Motor neuron (in vitro differentiated cells): ENCODE measurements at regions of chr22 and their contacts with region 1.

Region 1: GRCh38 chr22:22959147-22959827 is 71.7 kb downstream of the IGLL5 start:
- ATAC-seq: peak; percentile 69 to 90 (median 83)
- H3K4me3 ChIP-seq: no peak overlapping the region
- H3K27ac ChIP-seq: no peak overlapping the region
- H3K4me1 ChIP-seq: no peaks in the 10 kb centered on the region

Region 2: GRCh38 chr22:22463855-22464540 is 495.3 kb before region 1 on chr22:
- in situ Hi-C with region 1: loop called in 2 of 9 experiments (anchors 25 kb)
- ATAC-seq: peak; percentile 51 to 90 (median 70)
- H3K4me3 ChIP-seq: no peak overlapping the region
- H3K27ac ChIP-seq: no peak overlapping the region
- H3K4me1 ChIP-seq: peaks cover 0 to 2% of the 10 kb centered on the region in 2 donors

Region 3: DNA sequence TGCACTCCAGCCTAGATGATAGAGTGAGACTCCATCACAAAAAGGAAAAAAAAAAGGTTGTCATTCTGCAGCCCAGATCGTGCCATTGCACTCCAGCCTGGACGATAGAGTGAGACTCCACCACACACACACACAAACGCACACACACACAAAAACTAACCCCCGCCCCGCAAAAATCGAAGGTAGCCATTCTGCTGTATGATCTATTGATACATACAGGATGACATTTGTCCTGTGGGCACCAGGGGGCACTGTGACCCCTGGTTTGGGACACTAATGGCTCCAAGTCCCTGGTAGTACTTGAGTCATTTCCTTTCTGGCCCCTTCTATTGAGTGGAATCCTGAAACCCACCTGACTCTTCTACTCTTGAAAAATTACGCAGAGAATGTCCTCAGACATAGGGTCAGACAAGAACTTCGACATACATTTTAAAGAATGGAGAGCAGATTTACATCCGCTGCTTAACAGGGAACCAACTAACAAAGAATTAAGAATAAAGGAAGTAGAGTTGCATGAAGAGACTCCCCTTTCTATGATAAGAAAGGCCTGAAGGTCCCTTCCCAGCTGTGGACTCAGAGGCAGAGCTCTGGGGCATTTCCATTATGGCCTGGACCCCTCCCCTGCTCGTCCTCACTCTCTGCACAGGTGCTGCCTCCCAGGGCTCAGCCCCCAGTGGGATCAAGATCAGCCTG is 365.2 kb before region 1 on chr22:
- in situ Hi-C with region 1: loop called in 1 of 9 experiments (anchors 25 kb)
- ATAC-seq: peak in 5 of 8 experiments; percentile 29 to 83 (median 68)
- H3K4me3 ChIP-seq: no peak overlapping the region
- H3K27ac ChIP-seq: peak overlapping the region in 1 of 2 donors; percentile 5
- H3K4me1 ChIP-seq: no peaks in the 10 kb centered on the region

Region 4: DNA sequence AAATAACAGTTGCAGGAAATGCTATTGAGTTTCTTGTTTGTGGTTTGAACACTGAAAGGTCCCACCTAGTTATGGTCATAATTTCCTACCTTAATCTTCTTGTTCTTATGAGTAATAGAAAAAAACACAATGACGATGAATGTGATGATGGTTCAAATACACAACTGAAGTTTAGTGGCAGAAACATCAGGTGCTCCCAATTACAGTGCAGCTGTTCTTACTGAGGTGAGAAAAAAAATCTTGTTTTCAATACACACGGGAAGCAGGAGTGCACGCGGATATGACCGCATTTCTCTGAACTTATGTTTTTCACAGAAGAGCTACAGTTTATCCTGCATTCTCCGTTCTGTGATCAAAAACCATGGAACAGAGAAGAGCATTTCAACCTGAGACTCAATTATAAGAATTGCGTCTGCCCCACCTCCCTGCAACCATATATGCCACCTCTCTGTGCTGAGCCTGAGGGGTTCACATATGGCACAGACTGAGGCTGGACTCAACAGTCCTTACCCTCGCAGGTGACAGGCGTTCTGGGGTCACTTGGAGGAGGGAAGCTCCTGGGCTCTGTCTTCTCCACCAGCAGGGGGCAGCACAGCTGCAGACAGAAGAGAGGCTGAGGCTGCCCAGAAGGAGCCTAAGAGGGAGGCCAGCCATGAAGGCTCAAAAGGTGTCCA is 171.4 kb before region 1 on chr22:
- in situ Hi-C with region 1: no loop called
- ATAC-seq: peak in 3 of 8 experiments; percentile 87 to 96 (median 93)
- H3K4me3 ChIP-seq: no peak overlapping the region
- H3K27ac ChIP-seq: peak overlapping the region; percentile 1 to 62
- H3K4me1 ChIP-seq: no peaks in the 10 kb centered on the region

Region 5: DNA sequence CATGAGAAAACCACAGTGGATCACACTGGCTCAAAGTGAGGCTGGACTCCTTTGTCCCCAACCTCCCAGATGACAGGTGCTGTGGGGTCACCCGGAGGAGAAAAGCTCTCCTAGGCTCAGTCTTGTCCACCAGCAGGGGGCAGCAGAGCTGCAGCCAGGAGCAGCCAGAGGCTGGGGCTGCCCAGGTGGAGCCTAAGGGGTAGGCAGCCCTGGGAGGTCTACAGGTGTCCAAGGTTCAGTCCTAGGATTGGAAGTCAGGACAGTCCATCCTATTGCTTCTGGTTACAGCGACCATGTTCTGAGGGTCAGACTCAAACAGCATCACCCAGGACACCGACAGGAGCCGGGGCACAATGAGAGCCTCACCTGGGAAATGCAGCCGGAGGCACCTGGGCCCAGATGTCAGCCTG is 149.3 kb before region 1 on chr22:
- in situ Hi-C with region 1: no loop called
- ATAC-seq: peak in 2 of 8 experiments; percentile 67 to 73
- H3K4me3 ChIP-seq: no peak overlapping the region
- H3K27ac ChIP-seq: peak overlapping the region in 1 of 2 donors; percentile 41
- H3K4me1 ChIP-seq: no peaks in the 10 kb centered on the region

Region 6: DNA sequence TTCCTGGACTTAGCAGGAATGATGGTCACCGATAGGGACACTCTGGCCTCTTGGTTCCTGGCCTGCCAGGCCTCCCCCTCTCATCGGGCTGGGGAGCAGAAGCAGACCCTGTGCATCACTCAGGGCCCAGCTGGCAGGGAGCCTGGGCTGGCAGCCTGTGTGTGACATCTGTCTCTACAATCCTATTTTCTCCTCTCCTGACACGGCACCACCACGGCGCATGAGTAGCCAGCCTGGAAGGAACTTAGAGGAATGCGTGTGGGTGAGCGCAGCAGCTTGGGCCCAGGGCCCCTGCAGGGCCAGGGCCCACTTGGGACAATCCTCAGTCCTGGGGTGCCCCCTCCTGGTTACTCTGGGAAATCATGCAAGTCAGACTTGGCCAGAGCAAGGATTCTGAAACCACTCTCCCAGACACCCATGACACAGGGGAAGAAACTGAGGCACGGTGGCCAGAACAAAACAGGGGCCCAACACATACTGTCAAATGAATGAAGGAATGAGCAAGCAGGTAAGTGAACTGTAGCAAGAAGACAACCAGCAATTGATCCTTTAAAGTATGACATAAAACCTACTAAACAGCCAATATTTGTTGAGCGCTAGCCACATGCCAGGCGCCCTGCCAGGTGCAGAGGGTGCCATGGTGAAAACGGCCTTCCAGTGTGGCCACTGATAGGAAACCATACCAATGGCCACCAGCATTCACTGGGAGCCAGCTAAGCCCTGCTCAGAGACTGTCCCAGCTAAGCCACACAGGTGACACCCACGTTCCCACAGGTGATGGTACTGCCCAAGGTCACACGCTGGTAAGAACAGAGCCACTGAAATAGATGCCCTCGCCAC is 169.2 kb after region 1 on chr22:
- in situ Hi-C with region 1: loop called in 7 of 9 experiments (anchors 5 to 25 kb)
- ATAC-seq: peak; percentile 72 to 95 (median 90)
- H3K4me3 ChIP-seq: no peak overlapping the region
- H3K27ac ChIP-seq: peak overlapping the region; percentile 0 to 29
- H3K4me1 ChIP-seq: peaks cover 13 to 29% of the 10 kb centered on the region in 2 donors

Region 7: DNA sequence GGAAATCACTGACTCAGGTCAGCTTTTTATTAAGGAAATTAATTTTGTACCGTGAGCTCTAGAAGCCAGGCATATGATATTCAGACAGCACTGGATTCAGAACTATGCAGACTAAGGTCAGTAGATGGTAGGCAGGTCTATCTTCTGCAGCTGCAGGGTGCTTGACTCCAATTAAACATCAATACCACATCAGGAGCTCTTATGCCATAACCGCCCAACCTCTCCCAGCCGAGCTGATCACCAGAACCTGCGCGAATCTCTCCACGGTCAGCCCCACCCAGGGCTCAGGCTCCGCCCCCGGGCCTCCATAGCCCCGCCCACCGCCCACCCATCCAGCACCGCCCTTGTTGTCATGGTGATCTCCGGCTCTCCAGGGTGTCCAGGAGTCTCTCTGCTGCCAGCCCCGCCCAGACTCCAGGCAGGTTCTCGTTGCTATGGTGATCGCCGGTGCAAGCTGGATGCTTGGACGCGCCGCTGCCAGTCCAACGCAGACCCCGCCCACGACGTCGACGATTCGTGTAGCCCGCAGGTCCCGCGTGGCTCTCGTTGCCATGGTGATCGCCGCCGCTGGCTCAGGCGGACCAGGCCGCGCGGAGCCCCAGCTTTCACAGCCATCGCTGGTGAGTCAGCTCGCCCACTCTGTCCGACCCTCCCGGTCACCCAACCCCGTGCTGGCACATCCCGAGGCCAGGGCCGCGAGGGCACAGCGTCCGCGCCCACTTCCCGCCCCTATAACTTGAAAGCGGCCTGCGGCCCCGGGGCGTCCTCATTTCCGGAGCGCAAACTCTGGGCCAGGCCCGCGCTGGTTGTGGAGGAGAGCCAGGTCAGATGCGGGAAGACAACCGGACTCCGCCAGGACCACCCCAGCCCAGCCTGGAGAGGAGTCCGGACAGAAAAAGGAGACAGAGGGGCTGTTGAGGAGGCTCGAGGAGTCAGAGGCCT is 185.9 kb after region 1 on chr22 and contains the start of gene RAB36:
- in situ Hi-C with region 1: loop called in 3 of 9 experiments (anchors 25 kb)
- ATAC-seq: peak; percentile 82 to 90 (median 86)
- H3K4me3 ChIP-seq: peak within 1 kb of the TSS; percentile 37 to 47 (median 44)
- H3K27ac ChIP-seq: peak within 1 kb of the TSS; percentile 66 to 87
- H3K4me1 ChIP-seq: peaks cover 44 to 57% of the 10 kb centered on the region in 2 donors
- total RNA-seq, gene RAB36: 3.1 to 14.4 (median 3.9) TPM

Region 8: DNA sequence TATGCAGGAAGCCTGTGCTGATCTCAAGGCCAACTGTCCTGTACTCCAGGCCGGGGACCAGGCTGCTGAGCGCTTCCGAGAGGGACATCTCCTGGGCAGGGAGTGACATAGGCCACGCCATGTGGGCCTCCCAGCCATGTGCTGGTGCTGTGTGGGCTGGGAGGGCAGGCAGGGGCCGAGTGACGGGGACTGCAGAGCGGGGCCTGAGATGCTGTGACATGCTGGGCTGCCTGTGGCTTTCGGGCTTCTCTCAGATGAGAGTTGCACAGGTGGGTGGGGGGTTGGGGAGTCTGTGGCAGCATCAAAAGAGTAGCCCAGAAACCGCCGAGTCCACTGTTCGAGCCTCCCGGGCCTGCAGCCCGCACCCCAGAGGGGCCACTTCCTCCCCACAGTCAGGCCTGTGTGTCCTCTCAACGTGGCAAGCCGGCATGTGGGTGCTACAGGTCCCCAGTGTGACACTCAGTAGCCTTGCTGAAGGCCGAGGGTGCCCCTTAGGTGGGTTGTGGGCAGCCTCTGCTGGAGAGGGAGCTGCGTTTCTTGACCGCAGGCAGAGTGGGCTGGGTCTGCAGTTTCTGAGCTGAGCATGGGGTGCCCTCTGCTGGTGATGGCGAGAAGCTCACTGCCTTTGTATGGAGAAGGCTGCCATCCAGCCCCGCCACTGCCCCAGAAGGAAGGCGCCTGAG is 322.3 kb after region 1 on chr22:
- in situ Hi-C with region 1: loop called in 4 of 9 experiments (anchors 25 kb)
- ATAC-seq: peak; percentile 85 to 97 (median 96)
- H3K4me3 ChIP-seq: no peak overlapping the region
- H3K27ac ChIP-seq: peak overlapping the region in 1 of 2 donors; percentile 45
- H3K4me1 ChIP-seq: peaks cover 0 to 2% of the 10 kb centered on the region in 2 donors